Right lobe of liver (tissue), 6 donors: ENCODE measurements at regions of chr17 and their contacts with region 1.

Region 1: GRCh38 chr17:43393944-43394482 is 4.8 kb upstream of the ARL4D start:
- DNase-seq: peak; percentile 78 to 92 (median 80)
- ATAC-seq: peak; percentile 61 to 70 (median 64)
- H3K4me3 ChIP-seq: no peak overlapping the region
- H3K27ac ChIP-seq: no peak overlapping the region
- H3K4me1 ChIP-seq: peaks cover 0 to 35% (median 0%) of the 10 kb centered on the region in 4 donors
- H3K27me3 ChIP-seq: no peaks in the 10 kb centered on the region
- CTCF ChIP-seq: peak; percentile 93 to 98 (median 94)
- POLR2A ChIP-seq: no peak

Region 2: GRCh38 chr17:43449470-43450248 is 55.6 kb after region 1 on chr17:
- intact Hi-C with region 1: no loop called
- DNase-seq: peak; percentile 37 to 76 (median 64)
- ATAC-seq: peak; percentile 74 to 83 (median 82)
- H3K4me3 ChIP-seq: peak overlapping the region in 1 of 3 donors; percentile 19
- H3K27ac ChIP-seq: peak overlapping the region; percentile 66 to 83 (median 77)
- H3K4me1 ChIP-seq: peaks cover 0 to 58% (median 18%) of the 10 kb centered on the region in 4 donors
- H3K27me3 ChIP-seq: no peaks in the 10 kb centered on the region
- CTCF ChIP-seq: no peak
- POLR2A ChIP-seq: peak; percentile 48

Region 3: GRCh38 chr17:43483674-43484372 is 89.8 kb after region 1 on chr17 and contains the start of gene DHX8:
- intact Hi-C with region 1: loop called (anchors 5 kb)
- DNase-seq: peak; percentile 95 to 97 (median 97)
- ATAC-seq: peak; percentile 92 to 98 (median 94)
- H3K4me3 ChIP-seq: peak within 1 kb of the TSS; percentile 45 to 77 (median 64)
- H3K27ac ChIP-seq: peak within 1 kb of the TSS; percentile 63 to 90 (median 80)
- H3K4me1 ChIP-seq: peaks cover 0 to 58% (median 29%) of the 10 kb centered on the region in 4 donors
- H3K27me3 ChIP-seq: no peaks in the 10 kb centered on the region
- CTCF ChIP-seq: peak; percentile 100
- POLR2A ChIP-seq: peak; percentile 75
- total RNA-seq, gene DHX8: 14.1 to 18.6 (median 17.5) TPM